K562 (cell line): ENCODE measurements at regions of chr7 and their contacts with region 1.

Region 1: DNA sequence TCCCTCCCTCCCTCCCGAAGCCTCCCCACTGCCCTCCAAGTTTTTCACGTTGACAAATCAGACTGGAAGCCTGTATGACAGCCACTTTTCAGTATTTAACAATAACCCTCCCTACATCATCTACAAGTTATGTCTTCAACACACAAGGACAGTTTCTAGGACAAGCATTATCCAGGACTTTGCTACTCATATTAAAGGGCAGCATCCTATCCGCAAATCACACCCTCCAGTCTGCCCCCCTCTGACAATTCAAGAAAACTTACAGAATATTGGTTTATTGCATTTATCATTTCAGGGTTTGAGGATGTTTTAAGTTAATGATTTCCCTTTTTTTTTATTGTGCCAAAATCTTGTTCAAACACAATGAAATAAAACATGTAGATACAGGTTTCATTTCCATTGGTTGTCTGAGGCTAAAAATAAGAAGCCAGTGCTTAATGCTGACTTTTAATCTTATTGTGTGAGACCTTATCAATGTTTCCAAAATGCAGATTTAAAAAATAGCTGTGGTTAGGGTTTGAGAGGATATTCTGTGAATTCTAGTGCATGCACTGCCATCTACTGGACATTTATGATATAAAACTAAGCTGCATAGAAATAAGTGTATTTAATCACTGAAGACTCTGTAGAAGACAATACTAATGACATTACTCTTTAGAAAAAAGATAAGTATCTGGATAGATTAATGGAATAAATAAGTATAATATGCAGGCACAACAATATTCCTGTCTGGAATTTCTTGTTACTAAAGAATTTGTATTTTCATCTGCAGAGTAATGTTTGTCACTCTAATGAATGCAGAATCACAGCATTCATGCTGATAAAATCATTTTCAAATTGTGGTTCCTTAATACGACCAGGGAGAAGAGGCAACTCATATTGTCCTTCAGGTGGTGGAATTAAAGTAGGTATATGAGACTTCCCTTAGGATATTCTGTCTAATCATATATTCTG is 64.1 kb downstream of the CAV1 start:
- DNase-seq: peak; percentile 52 to 75 (median 64)
- ATAC-seq: peak; percentile 85
- H3K4me3 ChIP-seq: no peak overlapping the region
- H3K27ac ChIP-seq: no peak overlapping the region
- H3K4me1 ChIP-seq: peaks cover 0 to 9% of the 10 kb centered on the region in 2 experiments; a peak in 3 of 5 replicates
- H3K27me3 ChIP-seq: peaks cover 10% of the 10 kb centered on the region in 2 experiments; a peak in 3 of 5 replicates
- CTCF ChIP-seq: peak; percentile 45 to 95 (median 65); a peak in 4 of 6 replicates
- EP300 ChIP-seq: no peak
- POLR2A ChIP-seq: no peak
- RAD21 ChIP-seq: peak; percentile 98

Region 2: DNA sequence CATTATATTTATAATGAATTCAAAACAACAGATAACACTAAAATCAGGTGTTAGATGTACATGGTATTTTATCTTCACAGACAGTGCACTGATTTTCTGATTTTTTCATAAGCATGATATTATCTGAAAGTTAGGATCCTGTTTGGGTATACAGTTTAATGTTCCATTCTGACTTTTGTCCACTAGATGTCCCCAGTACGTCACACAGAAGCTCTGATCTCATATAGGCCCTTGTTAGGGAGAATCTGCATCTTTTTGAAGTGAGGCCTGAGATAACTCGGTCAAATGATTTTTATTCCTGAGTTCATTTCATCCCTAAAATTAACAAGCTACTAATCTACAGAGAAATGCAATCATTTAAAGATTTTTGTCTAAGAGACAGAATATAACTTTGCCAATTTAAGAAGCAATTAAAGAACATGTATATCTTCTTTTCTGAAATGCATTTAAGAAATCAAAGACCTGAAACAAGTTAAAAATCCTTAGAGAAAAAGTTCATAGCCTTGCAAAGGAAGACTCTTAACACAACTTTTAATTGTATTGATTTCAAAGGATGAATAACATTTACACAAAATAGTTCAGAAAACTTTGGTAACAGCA is 450.6 kb before region 1 on chr7:
- CTCF ChIA-PET with region 1: interaction called, 7 read pairs
- POLR2A ChIA-PET with region 1: no interaction called
- in situ Hi-C with region 1: no loop called
- intact Hi-C with region 1: loop called (anchors 1 kb)
- DNase-seq: peak; percentile 52 to 70 (median 58)
- ATAC-seq: peak; percentile 97
- H3K4me3 ChIP-seq: no peak overlapping the region
- H3K27ac ChIP-seq: no peak overlapping the region
- H3K4me1 ChIP-seq: no peaks in the 10 kb centered on the region
- H3K27me3 ChIP-seq: no peaks in the 10 kb centered on the region
- CTCF ChIP-seq: peak; percentile 61 to 84 (median 76)
- EP300 ChIP-seq: no peak
- POLR2A ChIP-seq: no peak
- RAD21 ChIP-seq: peak; percentile 83 to 86

Region 3: DNA sequence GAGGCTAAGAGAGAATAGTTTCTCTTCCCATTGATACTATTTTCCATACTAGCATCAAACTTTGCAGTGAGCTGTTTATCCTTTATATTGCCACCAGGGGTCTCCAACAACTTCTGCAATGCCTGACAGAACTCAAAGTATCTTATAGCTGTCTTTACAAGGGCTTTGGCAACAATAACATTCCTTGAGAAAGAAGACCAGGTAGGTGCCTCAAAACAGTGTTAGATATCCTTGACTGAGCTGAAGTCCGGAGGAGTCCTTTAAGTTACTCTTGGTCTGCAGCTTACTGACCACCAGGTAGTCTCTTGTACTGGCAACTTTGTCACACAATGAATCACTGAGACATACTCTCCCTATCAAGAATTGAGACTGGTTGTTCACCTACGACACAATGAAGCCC is 408.6 kb before region 1 on chr7:
- CTCF ChIA-PET with region 1: interaction called, 10 read pairs
- POLR2A ChIA-PET with region 1: no interaction called
- in situ Hi-C with region 1: no loop called
- intact Hi-C with region 1: loop called (anchors 1 kb)
- DNase-seq: peak; percentile 39 to 62 (median 48)
- ATAC-seq: peak; percentile 93
- H3K4me3 ChIP-seq: no peak overlapping the region
- H3K27ac ChIP-seq: no peak overlapping the region
- H3K4me1 ChIP-seq: peaks cover 0 to 5% of the 10 kb centered on the region in 2 experiments; a peak in 1 of 5 replicates
- H3K27me3 ChIP-seq: no peaks in the 10 kb centered on the region
- CTCF ChIP-seq: peak; percentile 70 to 92 (median 79)
- EP300 ChIP-seq: no peak
- POLR2A ChIP-seq: no peak
- RAD21 ChIP-seq: peak; percentile 98 to 99

Region 4: GRCh38 chr7:116438267-116438666 is 150.7 kb before region 1 on chr7:
- CTCF ChIA-PET with region 1: interaction called, 11 read pairs
- POLR2A ChIA-PET with region 1: no interaction called
- in situ Hi-C with region 1: no loop called
- intact Hi-C with region 1: loop called (anchors 1 kb)
- DNase-seq: peak in 2 of 4 experiments; percentile 20 to 49
- ATAC-seq: peak; percentile 79
- H3K4me3 ChIP-seq: no peak overlapping the region
- H3K27ac ChIP-seq: no peak overlapping the region
- H3K4me1 ChIP-seq: peaks cover 8 to 25% of the 10 kb centered on the region in 2 experiments; a peak in 3 of 5 replicates
- H3K27me3 ChIP-seq: no peaks in the 10 kb centered on the region; a peak in 1 of 5 replicates
- CTCF ChIP-seq: peak; percentile 32 to 71 (median 50); a peak in 4 of 6 replicates
- EP300 ChIP-seq: no peak
- POLR2A ChIP-seq: no peak
- RAD21 ChIP-seq: peak; percentile 70 to 80

Region 5: DNA sequence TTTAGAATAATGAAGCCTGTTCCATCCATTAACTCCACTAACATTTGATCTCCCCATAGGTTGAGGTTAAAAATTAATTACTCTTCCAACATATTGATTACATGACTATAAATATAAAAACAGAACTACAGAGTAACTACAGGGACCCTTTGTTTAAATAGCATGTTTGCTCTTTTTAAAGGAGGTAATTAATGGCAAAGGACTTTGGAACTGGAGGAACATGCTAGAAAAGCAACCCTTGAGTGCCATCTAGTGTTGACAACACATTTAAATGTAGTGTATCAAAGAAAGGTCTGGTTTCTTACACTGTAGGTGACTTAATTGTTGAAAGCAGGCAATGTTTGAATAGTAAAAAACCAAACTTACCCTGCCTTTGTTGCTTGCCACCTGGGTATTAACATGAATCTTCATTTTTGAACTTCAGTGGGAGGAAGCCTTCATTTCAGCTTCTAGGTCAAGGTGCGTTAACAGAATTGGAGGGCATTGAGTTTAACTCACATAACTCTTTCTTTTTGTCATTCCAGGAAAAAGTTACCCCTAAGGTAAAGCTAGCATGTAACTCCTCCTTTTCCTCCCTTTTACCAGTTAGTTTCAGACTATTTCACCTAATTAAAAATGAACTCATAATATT is 220.8 kb after region 1 on chr7:
- CTCF ChIA-PET with region 1: interaction called, 37 read pairs
- POLR2A ChIA-PET with region 1: no interaction called
- in situ Hi-C with region 1: loop called (anchors 5 kb)
- intact Hi-C with region 1: loop called (anchors 1 kb)
- DNase-seq: peak; percentile 41 to 82 (median 54)
- ATAC-seq: peak; percentile 96
- H3K4me3 ChIP-seq: no peak overlapping the region
- H3K27ac ChIP-seq: no peak overlapping the region
- H3K4me1 ChIP-seq: no peaks in the 10 kb centered on the region
- H3K27me3 ChIP-seq: peaks cover 9 to 19% of the 10 kb centered on the region in 2 experiments; a peak in 4 of 5 replicates
- CTCF ChIP-seq: peak; percentile 65 to 89 (median 71)
- EP300 ChIP-seq: no peak
- POLR2A ChIP-seq: no peak
- RAD21 ChIP-seq: peak; percentile 92 to 97

Region 6: GRCh38 chr7:116828281-116828680 is 239.4 kb after region 1 on chr7:
- CTCF ChIA-PET with region 1: no interaction called
- POLR2A ChIA-PET with region 1: no interaction called
- in situ Hi-C with region 1: no loop called
- intact Hi-C with region 1: no loop called
- DNase-seq: no peak
- ATAC-seq: peak; percentile 67
- H3K4me3 ChIP-seq: no peak overlapping the region
- H3K27ac ChIP-seq: no peak overlapping the region
- H3K4me1 ChIP-seq: no peaks in the 10 kb centered on the region
- H3K27me3 ChIP-seq: peaks cover 4 to 18% of the 10 kb centered on the region in 2 experiments; a peak in 3 of 5 replicates
- CTCF ChIP-seq: peak; percentile 35 to 59 (median 46); a peak in 3 of 6 replicates
- EP300 ChIP-seq: no peak
- POLR2A ChIP-seq: no peak
- RAD21 ChIP-seq: peak in 1 of 2 experiments; percentile 36; a peak in 2 of 4 replicates